Activated CD4-positive, alpha-beta memory T cell treated with anti-CD3 and anti-CD28 coated beads for 36 hours (primary cell): ENCODE measurements at regions of chr12 and their contacts with region 1.

Region 1: DNA sequence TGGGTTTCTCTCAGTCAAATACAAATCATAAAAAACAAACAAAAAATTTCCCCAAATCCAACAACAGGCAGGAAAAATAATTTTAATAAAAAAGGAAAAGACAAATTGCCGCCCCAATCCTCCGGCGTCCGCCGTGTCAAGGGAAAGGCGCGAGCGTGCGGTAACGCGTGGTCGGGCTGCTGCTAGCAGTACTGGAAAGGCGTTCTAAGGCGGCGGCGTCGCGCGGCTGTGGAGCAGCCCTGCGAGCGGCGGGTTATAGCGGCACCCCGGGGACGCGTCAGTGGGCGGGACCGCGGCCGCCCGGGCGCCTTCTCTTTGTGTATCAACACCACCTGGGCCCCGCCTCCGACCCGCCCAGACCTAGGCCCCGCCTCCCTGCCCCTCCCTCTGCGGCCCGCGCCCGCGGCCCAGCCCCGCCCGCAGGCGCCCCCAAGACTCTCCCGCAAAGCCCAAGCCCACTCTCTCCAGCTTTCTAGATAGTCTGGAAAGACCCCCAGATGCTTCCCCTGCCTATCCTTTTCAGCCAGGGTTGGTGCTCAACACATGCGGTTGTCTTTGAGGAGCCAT is at the start of gene SLC38A2:
- DNase-seq: peak; percentile 97
- H3K4me3 Mint-ChIP-seq: peak within 1 kb of the TSS; percentile 95
- H3K27ac Mint-ChIP-seq: peak within 1 kb of the TSS; percentile 99
- H3K4me1 Mint-ChIP-seq: peaks cover 54% of the 10 kb centered on the region
- H3K27me3 Mint-ChIP-seq: peaks cover 6% of the 10 kb centered on the region
- total RNA-seq, gene SLC38A2: 173 to 187 TPM

Region 2: GRCh38 chr12:45728630-45729232 is 643.9 kb before region 1 on chr12:
- CTCF ChIA-PET with region 1: no interaction called
- POLR2A ChIA-PET with region 1: interaction called, 4 read pairs
- intact Hi-C with region 1: loop called (anchors 2 kb)
- DNase-seq: peak; percentile 97
- H3K4me3 Mint-ChIP-seq: peak overlapping the region; percentile 95
- H3K27ac Mint-ChIP-seq: peak overlapping the region; percentile 99
- H3K4me1 Mint-ChIP-seq: peaks cover 17% of the 10 kb centered on the region
- H3K27me3 Mint-ChIP-seq: no peaks in the 10 kb centered on the region

Region 3: DNA sequence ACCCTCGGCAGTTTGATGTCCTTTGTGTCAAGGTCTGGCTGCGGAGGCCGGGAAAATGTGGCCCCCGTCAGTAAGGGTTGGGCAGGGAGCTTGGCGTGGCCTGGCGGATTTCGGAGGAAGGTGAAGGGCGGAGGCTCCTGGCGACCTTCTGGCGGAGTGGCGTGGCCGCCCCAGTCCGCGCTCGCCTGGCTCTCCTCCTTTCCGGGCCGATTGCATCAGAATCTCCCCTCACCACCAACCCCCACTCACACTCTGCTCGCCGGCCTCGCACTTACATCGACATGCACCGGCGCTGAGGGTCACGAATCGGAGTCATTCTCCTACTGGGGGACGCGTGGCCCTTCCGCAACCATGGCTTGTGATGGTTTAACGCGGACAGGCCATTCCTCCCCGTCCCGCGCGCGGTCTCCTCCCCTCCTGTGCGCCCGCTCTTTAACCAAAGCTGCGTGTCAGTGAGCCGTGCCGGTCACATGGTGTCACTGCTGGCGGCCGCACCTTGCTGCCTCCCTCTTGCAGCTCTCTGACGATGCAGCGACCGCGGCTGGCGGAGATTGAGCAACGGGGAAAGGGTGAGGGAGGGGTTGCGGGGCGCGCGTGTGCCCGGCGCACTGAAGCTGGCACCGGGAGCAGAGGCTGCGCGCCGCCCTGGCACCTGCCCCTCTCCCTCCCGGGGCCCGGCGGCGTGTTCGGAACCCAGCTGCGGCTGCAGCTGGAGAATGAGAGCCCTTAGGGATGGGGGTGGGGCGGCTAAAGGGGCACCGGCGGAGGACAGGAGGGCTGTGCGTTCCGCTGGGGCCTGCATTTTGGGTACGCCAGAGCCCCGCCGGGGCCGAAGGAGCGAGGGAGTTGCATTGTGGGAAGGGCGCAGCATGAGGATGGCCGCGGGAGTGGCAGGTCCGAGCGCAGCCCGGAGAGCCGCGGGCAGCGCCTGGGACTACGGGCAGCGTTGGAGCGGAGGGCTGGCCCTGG is 103.8 kb before region 1 on chr12 and contains the start of gene SLC38A1:
- CTCF ChIA-PET with region 1: interaction called, 3 read pairs
- POLR2A ChIA-PET with region 1: interaction called, 42 read pairs
- intact Hi-C with region 1: loop called (anchors 1 kb)
- DNase-seq: peak; percentile 92
- H3K4me3 Mint-ChIP-seq: no peak within 1 kb of the TSS
- H3K27ac Mint-ChIP-seq: no peak within 1 kb of the TSS
- H3K4me1 Mint-ChIP-seq: peaks cover 23% of the 10 kb centered on the region
- H3K27me3 Mint-ChIP-seq: no peaks in the 10 kb centered on the region
- total RNA-seq, gene SLC38A1: 142 TPM

Region 4: DNA sequence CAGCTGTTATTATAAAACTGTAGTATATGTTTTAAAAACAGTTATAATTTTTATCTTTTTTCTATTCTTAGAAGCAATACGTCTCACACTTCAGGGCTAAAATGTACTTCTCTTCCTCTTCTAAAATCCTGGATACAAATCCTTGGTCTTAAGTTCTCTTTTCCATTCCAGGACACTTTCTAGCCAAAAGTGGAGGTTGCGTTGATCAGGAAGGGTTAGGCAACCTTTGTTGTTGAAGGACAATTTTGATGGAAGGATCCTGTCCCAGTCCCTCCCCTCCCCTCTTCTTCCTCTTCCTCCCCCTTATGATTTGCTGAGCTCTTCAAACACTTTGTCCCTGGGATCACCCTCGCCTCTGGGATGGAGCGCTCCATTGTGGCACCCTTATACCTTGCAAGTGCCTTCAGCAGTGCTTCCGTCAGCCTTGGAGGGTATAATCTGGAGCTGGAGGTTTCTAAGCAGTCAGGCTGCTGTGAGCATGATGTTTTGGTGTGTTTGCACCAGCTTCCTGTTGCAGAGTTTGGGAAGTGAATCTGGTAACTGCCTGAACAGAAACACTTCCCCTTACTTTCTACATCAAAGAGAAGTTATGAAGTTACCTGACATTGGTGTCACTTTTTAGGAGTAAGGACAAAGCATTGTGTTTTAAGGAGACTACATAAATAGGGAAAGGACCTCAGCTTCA is 87.4 kb after region 1 on chr12:
- CTCF ChIA-PET with region 1: no interaction called
- POLR2A ChIA-PET with region 1: interaction called, 5 read pairs
- intact Hi-C with region 1: loop called (anchors 2 kb)
- DNase-seq: peak; percentile 18
- H3K4me3 Mint-ChIP-seq: peak overlapping the region; percentile 44
- H3K27ac Mint-ChIP-seq: peak overlapping the region; percentile 79
- H3K4me1 Mint-ChIP-seq: peaks cover 55% of the 10 kb centered on the region
- H3K27me3 Mint-ChIP-seq: no peaks in the 10 kb centered on the region

Region 5: DNA sequence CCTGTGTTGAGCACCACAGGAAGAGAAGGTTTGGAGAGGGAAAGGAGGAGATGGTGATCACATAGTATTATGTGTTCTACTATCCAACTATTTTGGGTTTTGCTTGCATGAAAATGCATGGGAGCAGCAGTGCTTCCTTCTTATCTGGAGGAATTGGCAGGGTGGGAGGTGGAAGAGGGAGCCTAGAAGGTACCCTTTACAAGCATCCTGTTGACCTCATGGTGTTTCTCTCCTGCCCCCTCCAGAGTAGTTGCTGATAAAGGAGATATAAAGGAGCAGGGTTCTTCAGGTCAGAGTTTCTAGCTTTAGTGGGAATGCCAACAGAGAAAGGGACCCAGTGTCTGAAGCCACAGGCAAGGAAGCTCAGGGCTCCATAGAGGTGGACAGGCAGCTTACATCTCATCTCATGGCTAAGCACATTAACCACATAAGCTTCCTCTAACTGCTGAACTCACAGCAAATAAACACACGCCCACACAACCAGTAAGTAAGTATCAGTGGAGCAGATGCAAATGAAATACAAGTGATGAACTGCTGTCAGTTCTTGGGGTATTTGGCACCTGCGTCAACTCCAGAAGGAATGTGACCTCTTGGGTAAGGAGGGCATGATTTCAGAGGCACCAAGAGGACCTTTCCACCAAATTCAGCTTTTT is 174.1 kb after region 1 on chr12:
- CTCF ChIA-PET with region 1: interaction called, 3 read pairs
- POLR2A ChIA-PET with region 1: interaction called, 4 read pairs
- intact Hi-C with region 1: loop called (anchors 1 kb)
- DNase-seq: peak; percentile 38
- H3K4me3 Mint-ChIP-seq: no peak overlapping the region
- H3K27ac Mint-ChIP-seq: peak overlapping the region; percentile 51
- H3K4me1 Mint-ChIP-seq: peaks cover 55% of the 10 kb centered on the region
- H3K27me3 Mint-ChIP-seq: no peaks in the 10 kb centered on the region

Region 6: DNA sequence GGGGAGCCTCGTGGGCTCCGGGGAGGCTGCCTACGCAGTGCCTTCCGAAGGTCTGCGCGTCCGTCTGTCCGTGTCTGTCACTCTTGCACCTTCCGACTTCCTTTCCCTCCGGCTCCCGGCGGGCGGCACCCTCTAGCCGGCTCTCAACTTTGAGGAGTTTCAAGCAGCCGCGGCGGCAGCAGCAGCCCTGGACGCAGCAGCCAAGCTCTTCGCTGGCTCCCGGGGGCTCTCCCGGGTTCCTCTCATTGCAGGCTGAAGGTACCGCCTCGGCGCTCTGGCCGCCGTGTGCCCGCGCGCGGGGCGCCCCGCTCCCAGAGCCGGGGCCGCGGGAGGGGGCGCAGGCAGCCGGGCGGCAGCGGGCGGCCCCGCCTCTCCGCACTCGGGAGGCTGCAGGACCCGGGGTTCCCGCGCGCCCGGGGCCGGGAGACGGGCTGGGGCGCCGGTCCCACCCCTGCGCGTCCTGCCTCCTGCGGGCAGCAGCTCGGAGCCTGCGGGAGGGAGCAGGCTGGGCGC is 706.9 kb after region 1 on chr12 and contains the starts of genes AMIGO2 and PCED1B:
- CTCF ChIA-PET with region 1: no interaction called
- POLR2A ChIA-PET with region 1: no interaction called
- intact Hi-C with region 1: loop called (anchors 1 kb)
- DNase-seq: peak; percentile 83
- H3K4me3 Mint-ChIP-seq: peak within 1 kb of the TSS; percentile 99
- H3K27ac Mint-ChIP-seq: peak within 1 kb of the TSS; percentile 92
- H3K4me1 Mint-ChIP-seq: peaks cover 72% of the 10 kb centered on the region
- H3K27me3 Mint-ChIP-seq: no peaks in the 10 kb centered on the region
- total RNA-seq, gene AMIGO2: 12.4 to 13.6 TPM
- total RNA-seq, gene PCED1B: 133 to 136 TPM

Region 7: GRCh38 chr12:47705566-47706425 is 1333.2 kb after region 1 on chr12 and contains the start of gene RPAP3:
- CTCF ChIA-PET with region 1: no interaction called
- POLR2A ChIA-PET with region 1: no interaction called
- intact Hi-C with region 1: loop called (anchors 10 kb)
- DNase-seq: peak; percentile 99
- H3K4me3 Mint-ChIP-seq: peak within 1 kb of the TSS; percentile 96
- H3K27ac Mint-ChIP-seq: peak within 1 kb of the TSS; percentile 95
- H3K4me1 Mint-ChIP-seq: peaks cover 50% of the 10 kb centered on the region
- H3K27me3 Mint-ChIP-seq: no peaks in the 10 kb centered on the region
- total RNA-seq, gene RPAP3: 49.4 to 50.2 TPM